HEK293T (cell line): ENCODE measurements at regions of chr17 and their contacts with region 1.

Region 1: DNA sequence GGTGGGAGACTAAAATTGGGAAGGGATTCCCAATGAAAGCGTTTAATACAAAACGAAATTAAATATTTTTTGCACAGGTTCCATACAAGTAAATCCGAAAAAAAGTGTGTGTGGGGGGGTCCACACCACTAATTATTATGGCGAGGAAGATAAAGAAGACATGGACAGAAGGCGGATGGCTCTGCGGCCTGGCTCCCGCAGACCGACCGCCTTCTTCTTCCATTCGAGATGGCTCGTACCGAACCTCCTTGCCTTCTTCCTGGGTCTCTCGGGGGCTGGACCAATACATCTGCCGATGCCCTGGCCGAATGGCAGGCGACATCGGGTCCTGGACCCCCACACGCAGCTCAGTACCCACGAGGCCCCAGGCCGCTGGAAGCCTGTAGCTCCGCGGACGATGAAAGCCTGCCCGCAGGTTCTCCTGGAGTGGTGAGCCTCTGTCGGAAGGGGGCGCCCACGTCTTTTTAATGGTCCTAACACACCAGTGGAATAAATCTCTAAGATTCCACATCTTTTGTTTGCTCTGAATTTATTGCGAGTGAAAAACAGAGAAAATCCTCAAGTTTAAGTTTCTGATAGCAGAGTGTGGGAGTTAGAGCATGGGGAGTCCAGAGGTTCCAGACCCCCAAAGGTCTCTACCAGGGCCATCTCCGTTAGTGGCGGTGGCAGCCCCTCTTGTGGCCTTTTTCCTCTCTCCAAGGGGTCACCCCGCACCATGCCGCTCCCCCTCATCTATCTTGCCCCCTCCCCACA is 1.4 kb downstream of the PRAC2 start:
- DNase-seq: peak; percentile 54

Region 2: GRCh38 chr17:48671697-48672171 is 52.7 kb before region 1 on chr17:
- CTCF ChIA-PET with region 1: interaction called, 10 read pairs
- POLR2A ChIA-PET with region 1: interaction called, 3 read pairs
- DNase-seq: peak; percentile 78

Region 3: DNA sequence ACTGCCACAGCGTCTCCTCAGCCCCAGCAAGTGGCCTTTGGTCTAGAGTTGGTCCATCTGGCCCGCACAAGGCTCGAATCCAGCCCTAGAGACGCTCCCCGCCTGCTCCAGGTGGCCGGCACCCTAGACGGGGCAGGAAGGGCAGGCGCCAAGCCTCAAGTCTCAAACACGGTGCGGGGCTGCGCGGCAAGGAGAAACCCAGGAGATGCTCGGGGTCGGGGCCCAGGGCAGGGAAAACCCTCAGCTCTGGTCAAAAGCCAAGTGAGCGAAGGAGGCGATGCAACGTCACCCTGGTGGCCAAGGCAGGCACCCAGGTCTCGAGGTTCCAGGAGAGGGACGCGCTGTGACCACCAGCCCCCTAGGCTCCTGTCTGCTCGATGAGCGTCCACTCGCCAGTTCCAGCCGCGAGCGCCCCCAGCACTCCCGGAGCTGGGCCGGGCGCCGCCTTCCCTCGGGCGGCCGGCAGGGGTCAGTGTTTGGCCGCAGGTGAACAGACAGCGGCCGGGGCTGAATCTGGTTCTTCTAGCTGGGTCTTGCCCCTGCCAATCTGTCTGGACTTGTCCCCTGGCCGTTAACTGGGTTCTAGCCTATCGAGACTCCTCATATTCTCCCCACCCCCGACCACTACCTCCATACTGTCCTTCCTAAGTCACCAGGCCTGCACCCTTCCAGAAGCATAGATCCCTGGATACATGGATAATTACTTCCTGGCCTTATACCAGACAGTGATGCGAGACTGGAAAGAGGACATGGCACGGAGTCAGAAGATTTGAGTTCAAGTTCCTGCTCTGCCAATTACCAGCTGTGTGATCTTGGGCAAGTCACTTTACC is 46.1 kb before region 1 on chr17:
- CTCF ChIA-PET with region 1: interaction called, 19 read pairs
- POLR2A ChIA-PET with region 1: interaction called, 12 read pairs
- DNase-seq: peak; percentile 89

Region 4: DNA sequence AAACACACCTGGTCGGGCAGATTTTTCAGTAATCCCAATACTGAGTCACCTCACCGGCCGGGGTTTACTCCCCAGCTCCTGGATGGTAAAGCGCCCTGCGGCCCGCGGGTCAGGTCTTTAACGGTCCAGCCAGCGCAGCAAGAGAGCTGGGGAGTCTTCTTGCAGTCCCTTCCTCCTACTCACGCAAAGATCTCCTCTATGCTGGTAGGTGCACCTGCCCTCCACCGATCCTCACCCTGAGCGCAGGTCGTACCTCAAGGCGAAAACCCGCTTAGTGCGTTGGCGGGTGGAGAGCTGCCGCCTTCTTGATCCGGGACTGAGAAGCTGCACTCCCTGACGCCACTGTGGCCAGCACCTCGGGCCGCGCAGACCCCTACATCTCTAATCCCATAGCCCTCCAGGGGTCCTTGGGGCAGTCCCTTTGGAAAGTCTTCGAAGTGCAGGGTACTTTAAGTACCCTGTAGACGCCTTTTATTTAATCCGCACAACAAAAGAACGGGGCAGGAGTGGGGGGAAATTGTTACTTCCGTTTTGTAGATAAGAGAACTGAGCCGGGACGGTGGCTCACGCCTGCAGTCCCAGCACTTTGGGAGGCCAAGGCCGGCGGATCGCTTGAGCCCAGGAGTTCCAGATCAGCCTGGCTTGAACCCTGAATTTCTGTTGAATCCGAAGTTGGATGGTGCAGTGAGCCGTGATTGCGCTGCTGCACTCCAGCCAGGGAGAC is 14.5 kb after region 1 on chr17:
- CTCF ChIA-PET with region 1: interaction called, 9 read pairs
- POLR2A ChIA-PET with region 1: interaction called, 29 read pairs
- DNase-seq: no peak

Region 5: DNA sequence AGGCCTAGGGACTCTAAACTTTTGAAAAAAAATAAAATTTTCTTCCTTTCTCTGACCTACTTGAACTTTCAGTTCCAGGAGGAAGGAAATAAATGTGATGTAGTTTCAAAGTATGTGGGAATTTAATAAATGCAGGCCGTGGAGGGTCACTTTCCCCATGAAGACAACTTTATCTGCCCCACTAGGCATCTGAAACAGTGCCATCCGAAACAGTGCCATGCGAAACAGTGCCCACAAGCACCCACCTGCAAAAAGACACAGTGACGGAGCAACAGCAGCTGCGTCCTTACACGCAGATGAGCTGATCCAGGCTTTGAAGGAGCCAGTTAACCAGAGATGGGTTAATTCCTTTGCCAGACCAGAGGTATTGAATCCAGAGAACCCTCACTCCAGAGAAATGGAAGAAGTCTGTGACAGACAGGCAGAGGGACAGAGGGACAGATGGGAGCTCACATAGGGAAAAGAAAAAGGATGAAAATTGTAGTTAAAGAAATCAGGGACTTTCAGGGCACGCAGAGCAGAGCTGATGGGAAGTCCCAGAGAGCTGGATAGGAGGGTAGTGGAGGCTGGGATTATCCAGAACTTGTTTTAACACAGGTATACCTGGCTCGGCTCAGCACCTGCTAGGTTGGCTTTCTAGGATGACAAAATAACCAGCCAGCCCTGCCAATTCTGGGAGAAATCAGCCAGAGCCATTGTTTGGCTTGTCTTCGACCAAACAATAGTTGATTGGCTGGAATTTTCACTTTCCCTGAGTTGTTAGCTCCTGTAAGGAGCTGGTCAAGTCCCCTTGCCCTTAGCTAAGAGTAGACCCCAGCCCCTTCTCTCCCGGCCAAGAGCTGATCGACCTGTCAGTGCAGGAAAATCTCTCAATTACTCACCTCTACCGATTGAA is 21.2 kb after region 1 on chr17:
- CTCF ChIA-PET with region 1: interaction called, 9 read pairs
- POLR2A ChIA-PET with region 1: interaction called, 29 read pairs
- DNase-seq: no peak

Region 6: GRCh38 chr17:48791128-48792032 is 67.0 kb after region 1 on chr17:
- CTCF ChIA-PET with region 1: interaction called, 66 read pairs
- POLR2A ChIA-PET with region 1: interaction called, 25 read pairs
- DNase-seq: peak; percentile 81